RWPE1 (cell line): ENCODE measurements at regions of chr9 and their contacts with region 1.

Region 1: DNA sequence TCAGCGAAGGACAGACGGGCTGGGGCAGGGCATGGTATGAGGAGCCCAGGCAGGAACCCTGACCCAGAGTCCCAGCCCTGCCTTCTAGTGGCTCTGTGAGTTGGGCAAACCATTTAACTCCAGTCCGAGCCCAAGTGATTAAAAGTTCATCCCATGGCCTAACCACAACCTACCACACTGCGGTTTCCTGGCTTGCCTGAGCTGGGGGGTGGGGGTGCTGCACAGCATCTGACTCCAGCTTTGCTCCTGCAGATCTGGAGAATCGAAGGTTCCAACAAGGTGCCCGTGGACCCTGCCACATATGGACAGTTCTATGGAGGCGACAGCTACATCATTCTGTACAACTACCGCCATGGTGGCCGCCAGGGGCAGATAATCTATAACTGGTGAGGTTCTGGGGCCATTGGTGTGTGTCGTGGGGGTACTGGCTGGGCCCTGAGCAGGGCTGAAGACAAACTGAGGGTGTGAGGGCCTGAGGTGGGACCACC is 49.0 kb downstream of the STOM start:
- DNase-seq: no peak
- H3K27ac ChIP-seq: peak overlapping the region; percentile 68
- CTCF ChIP-seq: no peak

Region 2: GRCh38 chr9:121267689-121268597 is 53.1 kb before region 1 on chr9 and contains the start of gene GSN:
- CTCF ChIA-PET with region 1: interaction called, 13 read pairs
- POLR2A ChIA-PET with region 1: no interaction called
- DNase-seq: peak; percentile 88
- H3K27ac ChIP-seq: peak within 1 kb of the TSS; percentile 73
- CTCF ChIP-seq: no peak

Region 3: DNA sequence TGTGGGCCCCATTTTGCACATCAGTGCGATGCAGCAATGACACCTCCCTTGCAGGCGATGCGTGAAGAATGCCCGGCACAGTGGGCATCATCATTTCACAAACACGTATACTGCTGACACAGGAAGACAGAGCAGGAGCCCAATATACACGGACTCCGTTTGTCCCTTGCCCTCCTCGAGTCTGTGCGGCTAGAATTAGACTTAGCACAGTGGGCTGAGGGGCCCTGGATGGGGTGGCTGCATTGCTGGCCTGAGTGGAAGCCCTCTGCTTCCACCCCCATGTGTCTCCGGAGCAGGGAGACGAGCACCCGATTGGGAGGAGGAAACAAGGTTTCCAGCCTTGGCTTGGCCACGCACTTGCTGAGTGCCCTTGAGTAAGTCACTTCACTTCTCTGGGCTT is 12.3 kb before region 1 on chr9:
- CTCF ChIA-PET with region 1: interaction called, 10 read pairs
- POLR2A ChIA-PET with region 1: no interaction called
- DNase-seq: no peak
- H3K27ac ChIP-seq: 0 out of 2 replicates have a peak overlapping the region, but pooled peaks have one; percentile 0
- CTCF ChIP-seq: no peak

Region 4: GRCh38 chr9:121376214-121376830 is 55.3 kb after region 1 on chr9:
- CTCF ChIA-PET with region 1: interaction called, 32 read pairs
- POLR2A ChIA-PET with region 1: no interaction called
- DNase-seq: no peak
- H3K27ac ChIP-seq: no peak overlapping the region
- CTCF ChIP-seq: peak; percentile 71

Region 5: DNA sequence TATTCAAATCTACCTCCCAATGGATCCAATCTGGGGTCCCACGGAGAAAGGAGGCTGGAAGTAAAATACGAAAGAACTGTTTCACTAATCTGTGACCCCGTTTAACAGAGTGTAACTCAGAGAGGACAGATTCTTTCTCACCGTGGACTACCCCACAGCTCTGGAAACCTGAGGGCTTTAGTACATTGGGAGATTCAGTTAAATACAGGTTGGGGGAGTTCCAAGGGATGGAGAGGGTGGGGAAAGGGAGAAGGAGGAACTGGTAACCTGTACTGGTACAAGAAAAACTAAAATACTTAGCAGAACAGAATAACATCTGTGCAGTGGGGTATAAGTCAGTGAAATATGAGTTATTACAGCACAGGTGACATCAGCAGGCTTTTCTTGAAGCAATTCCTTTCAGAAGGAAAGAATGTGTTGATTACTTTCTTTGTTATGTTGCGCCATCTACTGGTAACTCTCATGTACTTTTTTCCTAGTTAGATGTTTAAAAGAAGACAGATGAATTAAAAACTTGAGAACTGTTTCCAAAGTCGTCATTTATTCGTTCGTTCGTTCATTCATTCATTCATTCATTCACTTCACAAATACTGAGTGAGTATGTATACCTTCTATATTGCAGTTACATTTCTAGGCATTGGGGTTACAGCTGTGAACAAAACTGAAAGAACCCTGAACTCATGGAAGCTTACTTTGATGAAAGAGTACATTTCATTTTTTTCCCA is 79.0 kb after region 1 on chr9:
- CTCF ChIA-PET with region 1: interaction called, 101 read pairs
- POLR2A ChIA-PET with region 1: no interaction called
- DNase-seq: peak; percentile 78
- H3K27ac ChIP-seq: no peak overlapping the region
- CTCF ChIP-seq: peak; percentile 78